ENCODE measurements at regions of chr19 and their contacts with region 1.

Region 1: GRCh38 chr19:42596391-42597072 is 1.8 kb upstream of the CEACAM8 start:
- DNase-seq: no peak
- ATAC-seq: peak; percentile 65
- H3K4me3 Mint-ChIP-seq: no peak overlapping the region
- H3K27ac Mint-ChIP-seq: no peak overlapping the region
- H3K4me1 Mint-ChIP-seq: no peaks in the 10 kb centered on the region
- H3K27me3 Mint-ChIP-seq: peaks cover 31% of the 10 kb centered on the region

Region 2: DNA sequence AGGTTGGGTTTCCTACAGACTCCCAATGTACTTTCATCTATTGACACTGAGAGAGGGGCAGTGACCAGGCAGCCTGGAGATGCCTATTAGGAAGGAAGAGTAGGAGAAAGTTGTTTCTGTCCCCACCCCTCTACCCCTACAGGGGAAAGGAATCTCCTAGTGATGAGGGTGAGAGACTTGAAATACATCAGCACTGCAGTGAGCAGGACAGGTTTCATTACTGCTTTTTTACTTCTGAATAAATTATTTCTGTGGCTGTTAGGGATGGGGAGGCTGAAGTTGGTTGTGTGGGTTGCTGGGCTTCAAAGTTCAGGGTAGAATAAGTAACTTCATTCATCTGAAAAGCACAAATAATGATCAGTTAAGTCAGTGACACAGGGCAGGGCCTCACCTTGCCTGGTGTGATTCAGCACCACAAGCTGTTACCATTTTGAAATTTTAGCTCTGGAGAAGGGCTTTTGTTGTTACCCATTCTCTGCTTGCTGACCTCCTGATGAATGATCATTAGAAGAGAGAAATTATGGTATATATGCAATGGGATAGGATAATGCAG is 87.6 kb before region 1 on chr19:
- CTCF ChIA-PET with region 1: no interaction called
- DNase-seq: peak; percentile 9
- ATAC-seq: no peak
- H3K4me3 Mint-ChIP-seq: no peak overlapping the region
- H3K27ac Mint-ChIP-seq: no peak overlapping the region
- H3K4me1 Mint-ChIP-seq: peaks cover 39% of the 10 kb centered on the region
- H3K27me3 Mint-ChIP-seq: no peaks in the 10 kb centered on the region

Region 3: GRCh38 chr19:42563352-42564210 is 33.0 kb before region 1 on chr19:
- CTCF ChIA-PET with region 1: interaction called, 30 read pairs
- DNase-seq: peak; percentile 45
- ATAC-seq: peak; percentile 87
- H3K4me3 Mint-ChIP-seq: no peak overlapping the region
- H3K27ac Mint-ChIP-seq: no peak overlapping the region
- H3K4me1 Mint-ChIP-seq: peaks cover 7% of the 10 kb centered on the region
- H3K27me3 Mint-ChIP-seq: peaks cover 28% of the 10 kb centered on the region

Region 4: GRCh38 chr19:42606660-42607351 is 10.3 kb after region 1 on chr19:
- CTCF ChIA-PET with region 1: interaction called, 13 read pairs
- DNase-seq: peak; percentile 67
- ATAC-seq: peak; percentile 60
- H3K4me3 Mint-ChIP-seq: no peak overlapping the region
- H3K27ac Mint-ChIP-seq: no peak overlapping the region
- H3K4me1 Mint-ChIP-seq: no peaks in the 10 kb centered on the region
- H3K27me3 Mint-ChIP-seq: peaks cover 19% of the 10 kb centered on the region

Region 5: DNA sequence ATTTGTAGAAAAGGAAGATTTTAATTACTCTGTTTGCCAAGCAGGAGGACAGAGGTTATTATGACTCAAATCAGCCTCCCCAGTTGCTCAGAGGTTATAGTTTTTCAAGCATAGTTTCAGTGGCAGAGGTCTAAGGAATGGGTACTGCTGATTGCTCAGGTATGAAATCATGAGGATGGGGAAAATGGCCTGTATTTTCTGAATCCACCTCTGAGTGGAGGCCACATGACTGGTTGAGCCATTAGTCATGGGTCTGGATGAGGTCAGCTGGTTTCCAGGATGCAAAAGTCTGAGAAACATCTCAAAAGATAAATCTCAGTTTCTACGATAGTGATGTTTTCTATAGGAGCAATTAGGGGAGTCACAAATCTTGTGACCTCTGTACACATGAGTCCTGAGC is 61.0 kb after region 1 on chr19:
- CTCF ChIA-PET with region 1: no interaction called
- DNase-seq: no peak
- ATAC-seq: no peak
- H3K4me3 Mint-ChIP-seq: no peak overlapping the region
- H3K27ac Mint-ChIP-seq: no peak overlapping the region
- H3K4me1 Mint-ChIP-seq: peaks cover 7% of the 10 kb centered on the region
- H3K27me3 Mint-ChIP-seq: peaks cover 3% of the 10 kb centered on the region

Region 6: DNA sequence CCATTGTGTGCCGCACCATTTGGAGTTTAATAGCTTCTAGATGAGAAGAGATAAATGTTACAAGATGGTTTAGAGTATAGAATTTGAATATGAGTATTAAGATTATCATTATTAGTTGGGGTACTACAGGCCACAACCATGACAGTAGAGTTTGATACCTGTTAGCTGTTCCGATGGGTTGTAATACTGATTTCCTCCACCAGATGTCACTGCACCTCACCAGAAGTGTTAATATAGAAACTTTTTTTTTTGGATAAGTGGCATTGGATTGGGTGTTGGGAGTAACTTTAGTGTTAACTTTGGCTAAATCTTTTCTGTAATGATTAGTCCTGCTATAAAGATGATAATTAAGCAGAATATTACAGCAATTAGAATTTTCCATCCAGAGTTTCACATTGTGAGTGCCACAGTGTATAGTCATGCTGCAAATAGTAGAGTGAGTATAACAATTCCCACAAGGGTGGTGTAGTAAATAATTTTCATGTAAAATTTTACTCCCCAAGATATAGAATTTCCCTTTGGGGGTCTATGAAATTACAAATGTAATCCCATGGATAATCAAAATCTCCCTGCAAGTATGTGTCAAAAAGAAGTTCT is 87.5 kb after region 1 on chr19:
- CTCF ChIA-PET with region 1: no interaction called
- DNase-seq: no peak
- ATAC-seq: no peak
- H3K4me3 Mint-ChIP-seq: no peak overlapping the region
- H3K27ac Mint-ChIP-seq: no peak overlapping the region
- H3K4me1 Mint-ChIP-seq: no peaks in the 10 kb centered on the region
- H3K27me3 Mint-ChIP-seq: no peaks in the 10 kb centered on the region

Region 7: DNA sequence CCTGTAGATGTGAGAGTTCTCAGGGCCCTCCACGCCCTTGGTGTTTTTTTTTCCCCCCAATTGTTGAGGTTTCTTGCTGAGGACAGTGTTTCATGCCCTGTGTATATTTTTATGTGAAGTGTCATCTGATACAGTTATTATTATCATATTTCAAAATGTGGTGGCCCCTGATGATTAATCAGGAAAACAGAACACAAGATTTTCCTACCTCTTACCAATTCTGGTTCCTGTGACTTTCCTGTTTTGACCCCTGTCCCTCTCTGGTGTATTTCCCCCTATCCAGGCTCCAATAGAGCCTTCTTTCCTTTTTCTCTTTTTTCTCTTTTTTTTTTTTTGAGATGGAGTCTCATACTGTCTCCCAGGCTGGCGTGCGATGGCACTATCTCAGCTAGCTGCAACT is 168.3 kb after region 1 on chr19:
- CTCF ChIA-PET with region 1: no interaction called
- DNase-seq: no peak
- ATAC-seq: no peak
- H3K4me3 Mint-ChIP-seq: no peak overlapping the region
- H3K27ac Mint-ChIP-seq: no peak overlapping the region
- H3K4me1 Mint-ChIP-seq: no peaks in the 10 kb centered on the region
- H3K27me3 Mint-ChIP-seq: no peaks in the 10 kb centered on the region

Measured in activated CD8-positive, alpha-beta memory T cell treated with anti-CD3 and anti-CD28 coated beads, Interleukin-2, amount 10 ng/mL, durations not matched to agents 7 days and 5 days (primary cell).